ENCODE measurements at regions of chr18 and their contacts with region 1.

Region 1: GRCh38 chr18:5534845-5535244 is 9.0 kb downstream of the EPB41L3 start:
- DNase-seq: no peak

Region 2: DNA sequence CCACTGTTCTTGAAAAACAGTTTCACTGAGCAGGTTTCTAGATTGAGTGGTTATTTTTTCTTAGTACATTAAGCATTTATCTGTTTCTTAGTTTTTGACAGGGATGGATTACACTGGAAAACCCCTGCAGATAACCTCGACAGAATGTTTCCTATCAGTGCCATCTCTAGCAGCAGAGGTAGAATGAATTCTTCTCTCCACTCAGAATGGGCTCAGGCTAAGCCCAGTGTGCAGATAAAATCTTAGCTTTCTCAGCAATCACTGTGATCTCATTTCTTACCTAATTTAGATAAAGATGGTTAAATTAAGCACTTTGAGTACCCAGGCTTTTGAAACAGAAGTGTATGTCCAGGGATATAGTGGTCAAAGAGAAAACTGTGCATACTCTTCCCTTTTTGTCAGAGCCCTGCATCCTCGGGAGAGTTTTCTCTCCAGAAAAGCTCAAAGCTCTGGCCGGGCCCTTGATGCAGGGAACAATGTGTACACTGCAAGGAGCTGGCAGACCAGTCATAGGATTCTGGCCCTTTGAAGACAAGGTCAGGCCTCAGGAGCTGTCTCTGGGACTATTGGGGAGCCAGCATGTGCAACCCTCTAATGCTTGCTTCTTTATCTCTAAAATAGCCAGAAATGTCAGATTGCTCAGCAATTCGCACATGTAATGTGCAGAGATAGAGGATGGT is 327.2 kb before region 1 on chr18:
- intact Hi-C with region 1: no loop called
- DNase-seq: no peak

Region 3: DNA sequence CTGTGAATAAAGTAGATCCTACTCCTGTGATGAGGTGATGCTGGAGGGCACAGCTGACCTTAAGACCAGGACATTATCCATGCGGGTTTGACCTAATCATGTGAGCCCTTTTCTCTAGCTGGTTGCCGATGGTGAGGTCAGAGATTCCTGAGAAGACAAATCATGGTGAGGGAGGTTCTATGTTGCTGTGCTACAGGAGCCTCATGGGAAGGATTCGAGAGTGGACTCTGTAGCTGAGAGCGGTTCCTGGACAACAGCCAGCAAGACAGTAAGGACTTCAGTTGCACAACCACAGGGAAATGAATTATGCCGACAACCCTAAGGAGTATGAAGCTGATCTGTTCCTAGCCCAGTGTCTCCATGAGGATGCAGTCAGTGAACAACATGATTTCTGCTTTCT is 71.5 kb before region 1 on chr18:
- intact Hi-C with region 1: loop called in 1 of 2 experiments (anchors 10 kb)
- DNase-seq: peak; percentile 88

Region 4: GRCh38 chr18:5503740-5504139 is 31.1 kb before region 1 on chr18:
- intact Hi-C with region 1: no loop called
- DNase-seq: no peak